ENCODE measurements at regions of chr10 and their contacts with region 1.

Region 1: DNA sequence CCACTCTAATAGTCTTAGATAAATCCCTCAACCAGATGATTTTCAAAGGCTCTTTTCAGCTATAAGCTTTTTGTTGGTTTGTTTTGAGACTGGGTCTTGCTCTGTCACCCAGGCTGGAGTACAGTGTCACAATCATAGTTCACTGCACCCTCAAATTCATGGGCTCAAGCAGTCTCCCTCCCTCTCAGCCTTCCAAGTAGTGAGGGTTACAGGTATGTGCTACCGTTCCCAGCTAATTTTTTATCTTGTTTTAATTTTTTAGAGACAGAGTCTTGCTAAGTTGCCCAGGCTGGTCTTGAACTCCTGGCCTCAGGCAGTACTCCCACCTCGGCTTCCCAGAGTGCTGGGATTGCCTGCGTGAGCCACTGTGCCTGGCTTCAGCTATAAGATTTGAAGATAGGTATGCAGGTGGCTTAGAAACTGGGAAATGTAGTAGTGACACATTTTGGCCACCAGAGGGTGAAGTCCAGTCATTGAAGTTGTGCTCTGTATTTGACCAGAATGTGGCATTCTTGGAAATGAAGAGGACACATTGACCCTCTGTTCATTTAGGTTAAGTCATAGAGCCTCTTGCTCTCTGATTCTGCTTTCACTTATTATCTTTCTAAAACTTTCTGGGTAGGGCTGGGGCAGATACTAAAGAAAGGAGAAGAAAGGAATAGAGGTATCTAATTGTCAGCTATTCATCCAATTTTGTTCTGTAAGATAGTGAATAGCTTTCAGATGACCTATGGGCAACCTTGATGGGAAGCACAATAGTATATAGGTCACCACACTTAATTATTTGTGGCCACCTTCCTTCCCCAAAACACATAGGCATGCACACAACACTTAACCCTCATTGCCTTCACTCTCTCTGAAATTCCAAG is 36.0 kb downstream of the R3HCC1L start:
- DNase-seq: peak; percentile 60
- ATAC-seq: peak; percentile 83
- H3K4me3 ChIP-seq: no peak overlapping the region
- H3K27ac ChIP-seq: no peak overlapping the region
- H3K4me1 ChIP-seq: no peaks in the 10 kb centered on the region
- H3K27me3 ChIP-seq: no peaks in the 10 kb centered on the region
- CTCF ChIP-seq: peak; percentile 65
- POLR2A ChIP-seq: no peak
- RAD21 ChIP-seq: peak; percentile 62

Region 2: DNA sequence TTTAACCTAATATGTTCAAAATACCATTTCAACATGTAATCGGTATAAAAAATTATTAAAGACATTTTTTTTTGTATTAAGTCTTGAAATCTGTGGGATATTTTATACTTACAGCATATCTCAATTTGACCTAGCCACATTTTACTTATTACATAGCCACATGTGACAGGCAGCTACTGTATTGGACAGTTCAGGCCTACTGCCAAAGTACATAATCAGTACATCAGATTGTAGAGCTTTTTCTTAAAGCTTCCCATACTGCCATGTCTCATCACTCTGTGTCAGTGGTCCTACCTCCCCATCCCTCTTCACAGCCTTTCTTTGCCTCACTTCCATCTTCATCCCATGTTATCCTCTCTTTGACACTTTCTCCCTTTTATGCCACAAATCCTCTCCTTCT is 54.5 kb after region 1 on chr10:
- CTCF ChIA-PET with region 1: no interaction called
- POLR2A ChIA-PET with region 1: no interaction called
- dilution Hi-C with region 1: no loop called
- in situ Hi-C with region 1: no loop called
- intact Hi-C with region 1: loop called (anchors 5 kb)
- DNase-seq: peak; percentile 55
- ATAC-seq: peak; percentile 37
- H3K4me3 ChIP-seq: no peak overlapping the region
- H3K27ac ChIP-seq: no peak overlapping the region
- H3K4me1 ChIP-seq: peaks cover 10% of the 10 kb centered on the region
- H3K27me3 ChIP-seq: no peaks in the 10 kb centered on the region
- CTCF ChIP-seq: no peak
- POLR2A ChIP-seq: no peak
- RAD21 ChIP-seq: no peak

Region 3: GRCh38 chr10:98414932-98415730 is 244.6 kb after region 1 on chr10 and contains the start of gene PYROXD2:
- CTCF ChIA-PET with region 1: no interaction called
- POLR2A ChIA-PET with region 1: no interaction called
- dilution Hi-C with region 1: no loop called
- in situ Hi-C with region 1: no loop called
- intact Hi-C with region 1: loop called (anchors 10 kb)
- DNase-seq: peak; percentile 88
- ATAC-seq: peak; percentile 93
- H3K4me3 ChIP-seq: peak within 1 kb of the TSS; percentile 70
- H3K27ac ChIP-seq: peak within 1 kb of the TSS; percentile 95
- H3K4me1 ChIP-seq: peaks cover 30% of the 10 kb centered on the region
- H3K27me3 ChIP-seq: no peaks in the 10 kb centered on the region
- CTCF ChIP-seq: no peak
- POLR2A ChIP-seq: peak; percentile 61; the same call in 1 of the 2 replicates
- RAD21 ChIP-seq: no peak; the same call in 1 of the 2 replicates
- total RNA-seq, gene PYROXD2: 5.8 and 6.5 TPM in 2 replicates